MCF 10A (cell line): ENCODE measurements at regions of chrX and their contacts with region 1.

Region 1: DNA sequence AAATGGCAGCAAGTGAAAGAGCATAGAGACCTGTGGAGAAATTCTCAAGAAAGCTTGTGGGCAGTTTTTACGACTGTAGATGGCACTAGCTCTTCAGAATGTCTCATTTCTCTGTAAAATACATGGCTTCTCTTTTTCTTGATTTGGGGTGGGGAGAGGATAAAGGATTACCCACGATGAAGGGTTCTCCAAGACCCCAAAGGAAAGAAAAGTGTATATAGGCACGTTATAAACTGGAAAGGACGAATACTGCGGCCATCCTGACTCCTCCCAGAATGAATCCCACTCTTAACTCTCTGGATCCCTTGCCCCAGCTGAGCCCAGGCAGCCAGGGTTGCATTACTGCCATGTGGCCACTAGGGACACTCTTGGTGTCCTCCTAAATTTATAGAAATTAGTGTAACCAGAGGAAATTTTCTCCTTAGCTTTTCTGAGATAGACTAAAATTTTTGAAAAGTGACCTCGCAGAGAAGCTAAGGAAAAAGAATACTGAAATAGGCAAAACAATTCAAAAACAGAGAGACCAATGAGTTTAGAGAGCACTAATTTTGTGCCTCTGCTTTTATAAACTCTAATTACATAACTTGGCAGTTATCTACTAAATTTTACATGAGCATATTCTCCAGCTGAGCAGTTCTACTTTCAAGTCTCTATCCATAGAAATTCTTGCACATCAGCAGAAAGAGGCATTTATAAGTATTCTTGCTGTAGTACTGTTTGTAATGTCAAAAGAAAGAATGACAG is 37.8 kb upstream of the PCDH19 start:
- DNase-seq: peak; percentile 54
- H3K4me3 Mint-ChIP-seq: peak overlapping the region; percentile 17
- H3K27ac Mint-ChIP-seq: no peak overlapping the region
- H3K4me1 Mint-ChIP-seq: peaks cover 6% of the 10 kb centered on the region
- H3K27me3 Mint-ChIP-seq: peaks cover 35% of the 10 kb centered on the region
- CTCF ChIP-seq: peak; percentile 58

Region 2: DNA sequence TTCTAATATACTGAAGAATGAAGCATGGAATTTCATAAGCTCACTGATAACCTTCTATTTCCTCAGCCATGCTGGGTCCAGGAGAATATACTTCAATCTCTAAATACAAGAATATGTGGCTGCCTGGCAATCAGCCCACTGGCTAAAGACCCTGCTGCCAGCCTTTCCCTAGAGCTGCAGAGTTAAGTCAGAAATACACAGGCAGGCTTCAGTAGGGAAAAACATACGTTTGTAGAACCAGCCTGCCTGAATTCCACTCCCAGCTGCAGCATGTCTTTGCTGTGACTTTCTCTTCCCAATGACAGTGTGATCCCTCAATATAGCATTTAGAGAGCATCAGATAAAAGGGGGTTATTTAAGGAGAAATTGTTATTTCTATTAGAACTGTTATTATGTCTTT is 326.9 kb before region 1 on chrX:
- CTCF ChIA-PET with region 1: no interaction called
- POLR2A ChIA-PET with region 1: no interaction called
- intact Hi-C with region 1: no loop called
- DNase-seq: no peak
- H3K4me3 Mint-ChIP-seq: no peak overlapping the region
- H3K27ac Mint-ChIP-seq: no peak overlapping the region
- H3K4me1 Mint-ChIP-seq: no peaks in the 10 kb centered on the region
- H3K27me3 Mint-ChIP-seq: peaks cover 23% of the 10 kb centered on the region
- CTCF ChIP-seq: no peak

Region 3: GRCh38 chrX:100615005-100615404 is 167.2 kb after region 1 on chrX:
- CTCF ChIA-PET with region 1: no interaction called
- POLR2A ChIA-PET with region 1: no interaction called
- intact Hi-C with region 1: loop called (anchors 10 kb)
- DNase-seq: peak; percentile 59
- H3K4me3 Mint-ChIP-seq: no peak overlapping the region
- H3K27ac Mint-ChIP-seq: no peak overlapping the region
- H3K4me1 Mint-ChIP-seq: no peaks in the 10 kb centered on the region
- H3K27me3 Mint-ChIP-seq: peaks cover 52% of the 10 kb centered on the region
- CTCF ChIP-seq: peak; percentile 34